ENCODE measurements at regions of chr17 and their contacts with region 1.

Region 1: GRCh38 chr17:82913295-82914042 is 73.6 kb upstream of the ZNF750 start:
- DNase-seq: no peak
- H3K4me3 ChIP-seq: no peak overlapping the region
- H3K4me3 Mint-ChIP-seq: peak overlapping the region in 1 of 2 donors; percentile 31
- H3K27ac ChIP-seq: no peak overlapping the region
- H3K27ac Mint-ChIP-seq: peak overlapping the region in 3 of 7 donors; percentile 18 to 36 (median 20)
- H3K4me1 ChIP-seq: peaks cover 14 to 16% of the 10 kb centered on the region in 2 donors
- H3K4me1 Mint-ChIP-seq: peaks cover 22% of the 10 kb centered on the region
- H3K27me3 ChIP-seq: no peaks in the 10 kb centered on the region
- H3K27me3 Mint-ChIP-seq: peaks cover 0 to 2% (median 0%) of the 10 kb centered on the region in 3 donors
- CTCF ChIP-seq: peak; percentile 11

Region 2: GRCh38 chr17:82781894-82782274 is 131.6 kb before region 1 on chr17:
- intact Hi-C with region 1: loop called in 1 of 2 experiments (anchors 5 kb)
- DNase-seq: peak; percentile 79 to 82 (median 80)
- H3K4me3 ChIP-seq: no peak overlapping the region
- H3K4me3 Mint-ChIP-seq: peak overlapping the region in 1 of 2 donors; percentile 62
- H3K27ac ChIP-seq: no peak overlapping the region
- H3K27ac Mint-ChIP-seq: peak overlapping the region in 2 of 7 donors; percentile 69 to 71
- H3K4me1 ChIP-seq: peaks cover 10 to 11% of the 10 kb centered on the region in 2 donors
- H3K4me1 Mint-ChIP-seq: peaks cover 13% of the 10 kb centered on the region
- H3K27me3 ChIP-seq: no peaks in the 10 kb centered on the region
- H3K27me3 Mint-ChIP-seq: peaks cover 0 to 3% (median 2%) of the 10 kb centered on the region in 3 donors
- CTCF ChIP-seq: peak; percentile 98

Region 3: GRCh38 chr17:82876602-82877379 is 36.7 kb before region 1 on chr17:
- intact Hi-C with region 1: loop called in 1 of 2 experiments (anchors 5 kb)
- DNase-seq: peak in 2 of 3 donors; percentile 33 to 36
- H3K4me3 ChIP-seq: peak overlapping the region in 1 of 3 experiments; percentile 39
- H3K4me3 Mint-ChIP-seq: no peak overlapping the region
- H3K27ac ChIP-seq: peak overlapping the region; percentile 11 to 42
- H3K27ac Mint-ChIP-seq: peak overlapping the region; percentile 44 to 87 (median 69)
- H3K4me1 ChIP-seq: peaks cover 69 to 83% of the 10 kb centered on the region in 2 donors
- H3K4me1 Mint-ChIP-seq: peaks cover 82% of the 10 kb centered on the region
- H3K27me3 ChIP-seq: no peaks in the 10 kb centered on the region
- H3K27me3 Mint-ChIP-seq: peaks cover 0 to 2% (median 1%) of the 10 kb centered on the region in 3 donors
- CTCF ChIP-seq: no peak